ENCODE measurements at regions of chr20 and their contacts with region 1.

Region 1: DNA sequence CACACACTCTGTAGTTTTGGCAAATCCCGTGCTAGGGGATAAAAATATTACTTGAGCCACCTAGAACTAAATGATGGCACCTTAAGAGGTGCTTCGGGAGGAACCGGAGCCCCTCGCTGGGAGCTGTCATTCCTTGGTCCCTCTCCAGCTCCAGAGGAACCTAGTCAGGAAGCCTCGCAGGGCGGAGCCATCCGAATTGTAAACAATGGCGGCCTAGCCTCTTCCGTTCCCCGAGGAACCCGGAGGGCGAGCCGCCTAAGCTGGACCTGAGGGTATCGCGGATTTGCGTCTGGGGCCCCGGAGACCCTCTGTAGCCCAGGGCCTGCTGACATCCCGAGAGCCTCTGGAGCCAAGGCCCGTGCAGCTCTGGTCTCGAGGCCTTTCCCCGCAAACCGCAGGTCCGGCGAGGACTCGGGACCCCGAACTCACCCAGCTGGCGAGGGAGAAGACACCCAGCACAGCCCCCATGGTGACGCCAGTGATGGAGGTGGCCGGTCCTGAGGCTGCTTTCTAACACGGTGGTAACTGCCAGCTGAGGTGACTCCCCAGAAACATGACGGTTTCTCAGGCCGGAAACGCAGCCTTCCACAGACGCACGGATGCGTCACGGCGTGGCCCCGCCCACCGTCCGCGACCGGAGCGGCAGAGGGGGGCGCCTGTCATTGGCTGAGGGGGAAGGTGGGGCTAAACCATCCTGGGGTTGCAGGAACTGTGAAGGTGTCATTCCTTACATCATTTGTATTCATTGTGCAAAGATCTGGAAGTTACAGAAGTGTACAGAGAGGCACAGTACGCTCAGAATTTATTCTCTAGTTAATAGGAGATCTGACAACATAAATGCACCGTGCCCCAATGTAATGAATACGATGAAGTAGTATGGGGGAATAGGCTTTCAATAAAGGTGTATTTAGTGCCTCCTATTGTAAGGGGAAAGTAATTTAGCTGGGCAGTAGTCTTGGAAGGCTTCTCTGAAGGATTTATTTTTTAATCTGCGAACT is at the start of gene SERINC3:
- DNase-seq: peak; percentile 95 to 97 (median 96)
- ATAC-seq: peak; percentile 98 to 99 (median 99)
- H3K4me3 ChIP-seq: peak within 1 kb of the TSS; percentile 68 to 92 (median 84)
- H3K27ac ChIP-seq: peak within 1 kb of the TSS; percentile 93 to 99 (median 98)
- H3K4me1 ChIP-seq: peaks cover 10 to 50% (median 43%) of the 10 kb centered on the region in 12 donors
- H3K27me3 ChIP-seq: no peaks in the 10 kb centered on the region
- CTCF ChIP-seq: peak in 1 of 12 donors; percentile 18
- POLR2A ChIP-seq: peak; percentile 61 to 86
- total RNA-seq, gene SERINC3: 85.5 to 114 (median 97.7) TPM

Region 2: GRCh38 chr20:44475694-44476560 is 45.9 kb before region 1 on chr20 and contains the start of gene TTPAL:
- intact Hi-C with region 1: loop called in 2 of 10 experiments (anchors 5 kb)
- DNase-seq: peak; percentile 88 to 94 (median 91)
- ATAC-seq: peak; percentile 93 to 98 (median 98)
- H3K4me3 ChIP-seq: peak within 1 kb of the TSS; percentile 60 to 90 (median 76)
- H3K27ac ChIP-seq: peak within 1 kb of the TSS; percentile 58 to 97 (median 90)
- H3K4me1 ChIP-seq: peaks cover 0 to 20% (median 11%) of the 10 kb centered on the region in 12 donors
- H3K27me3 ChIP-seq: no peaks in the 10 kb centered on the region
- CTCF ChIP-seq: peak in 10 of 12 donors; percentile 17 to 62 (median 40)
- POLR2A ChIP-seq: peak; percentile 88 to 98
- total RNA-seq, gene TTPAL: 2.8 to 6.0 (median 4.2) TPM